ENCODE measurements at regions of chr22 and their contacts with region 1.

Region 1: GRCh38 chr22:46006379-46007002 is 29.5 kb upstream of the WNT7B start:
- DNase-seq: peak; percentile 72 to 90 (median 85)
- H3K4me3 ChIP-seq: no peak overlapping the region
- H3K4me3 Mint-ChIP-seq: peak overlapping the region in 4 of 7 donors; percentile 10 to 53 (median 26)
- H3K27ac ChIP-seq: no peak overlapping the region
- H3K27ac Mint-ChIP-seq: peak overlapping the region in 3 of 8 donors; percentile 19 to 79 (median 58)
- H3K4me1 ChIP-seq: peaks cover 8% of the 10 kb centered on the region
- H3K4me1 Mint-ChIP-seq: peaks cover 10 to 13% (median 12%) of the 10 kb centered on the region in 3 donors
- H3K27me3 ChIP-seq: no peaks in the 10 kb centered on the region
- H3K27me3 Mint-ChIP-seq: peaks cover 6% of the 10 kb centered on the region in 2 donors

Region 2: GRCh38 chr22:45775569-45776312 is 230.8 kb before region 1 on chr22:
- CTCF ChIA-PET with region 1: no interaction called
- POLR2A ChIA-PET with region 1: no interaction called
- DNase-seq: no peak
- H3K4me3 ChIP-seq: no peak overlapping the region
- H3K4me3 Mint-ChIP-seq: no peak overlapping the region
- H3K27ac ChIP-seq: no peak overlapping the region
- H3K27ac Mint-ChIP-seq: no peak overlapping the region
- H3K4me1 ChIP-seq: no peaks in the 10 kb centered on the region
- H3K4me1 Mint-ChIP-seq: peaks cover 2 to 31% (median 12%) of the 10 kb centered on the region in 3 donors
- H3K27me3 ChIP-seq: no peaks in the 10 kb centered on the region
- H3K27me3 Mint-ChIP-seq: no peaks in the 10 kb centered on the region

Region 3: DNA sequence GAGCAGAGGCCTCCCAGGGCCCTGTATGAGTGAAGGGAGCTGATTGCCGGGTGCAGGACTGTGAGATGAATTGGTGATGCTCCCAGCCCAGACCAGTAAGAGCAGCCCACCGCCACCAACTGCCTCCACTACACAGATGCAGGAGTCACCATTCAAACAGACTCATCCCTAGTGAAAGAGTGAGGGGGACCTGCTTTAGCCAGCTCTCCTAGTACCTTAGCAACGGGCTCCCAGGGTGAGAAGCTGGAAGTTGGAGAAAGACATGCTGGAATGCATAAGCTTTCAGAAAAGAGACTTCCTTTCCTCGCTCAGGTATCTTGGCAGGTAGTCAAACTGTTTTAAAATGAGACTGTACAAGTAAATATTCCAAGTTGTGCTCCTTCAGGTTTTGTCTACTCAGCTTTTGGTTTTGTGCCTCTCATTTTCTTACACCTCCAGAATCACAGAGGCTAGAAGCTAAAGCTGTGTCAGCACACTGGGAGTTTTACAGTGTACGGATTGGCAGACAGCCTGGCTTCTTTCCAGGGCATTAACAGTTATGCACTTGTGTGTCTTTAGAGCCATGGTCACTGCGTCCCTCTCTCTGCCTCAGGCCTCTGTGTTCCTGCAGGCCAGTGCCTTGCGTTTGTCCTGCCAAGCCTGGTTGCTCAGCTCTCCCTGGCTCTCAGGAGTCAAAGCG is 188.6 kb before region 1 on chr22:
- CTCF ChIA-PET with region 1: no interaction called
- POLR2A ChIA-PET with region 1: no interaction called
- DNase-seq: no peak
- H3K4me3 ChIP-seq: no peak overlapping the region
- H3K4me3 Mint-ChIP-seq: no peak overlapping the region
- H3K27ac ChIP-seq: no peak overlapping the region
- H3K27ac Mint-ChIP-seq: no peak overlapping the region
- H3K4me1 ChIP-seq: no peaks in the 10 kb centered on the region
- H3K4me1 Mint-ChIP-seq: peaks cover 0 to 6% (median 0%) of the 10 kb centered on the region in 3 donors
- H3K27me3 ChIP-seq: no peaks in the 10 kb centered on the region
- H3K27me3 Mint-ChIP-seq: peaks cover 0 to 1% of the 10 kb centered on the region in 2 donors

Region 4: GRCh38 chr22:45867118-45867905 is 139.2 kb before region 1 on chr22:
- CTCF ChIA-PET with region 1: no interaction called
- POLR2A ChIA-PET with region 1: no interaction called
- DNase-seq: no peak
- H3K4me3 ChIP-seq: no peak overlapping the region
- H3K4me3 Mint-ChIP-seq: no peak overlapping the region
- H3K27ac ChIP-seq: no peak overlapping the region
- H3K27ac Mint-ChIP-seq: no peak overlapping the region
- H3K4me1 ChIP-seq: no peaks in the 10 kb centered on the region
- H3K4me1 Mint-ChIP-seq: peaks cover 5 to 11% (median 5%) of the 10 kb centered on the region in 3 donors
- H3K27me3 ChIP-seq: peaks cover 13% of the 10 kb centered on the region
- H3K27me3 Mint-ChIP-seq: peaks cover 22 to 37% of the 10 kb centered on the region in 2 donors

Region 5: GRCh38 chr22:45994491-45995404 is 11.7 kb before region 1 on chr22:
- CTCF ChIA-PET with region 1: interaction called, 68 read pairs
- POLR2A ChIA-PET with region 1: no interaction called
- DNase-seq: peak; percentile 52 to 80 (median 71)
- H3K4me3 ChIP-seq: no peak overlapping the region
- H3K4me3 Mint-ChIP-seq: peak overlapping the region in 1 of 7 donors; percentile 51
- H3K27ac ChIP-seq: no peak overlapping the region
- H3K27ac Mint-ChIP-seq: peak overlapping the region in 6 of 8 donors; percentile 24 to 81 (median 69)
- H3K4me1 ChIP-seq: no peaks in the 10 kb centered on the region
- H3K4me1 Mint-ChIP-seq: peaks cover 6 to 11% (median 9%) of the 10 kb centered on the region in 3 donors
- H3K27me3 ChIP-seq: no peaks in the 10 kb centered on the region
- H3K27me3 Mint-ChIP-seq: peaks cover 5 to 6% of the 10 kb centered on the region in 2 donors

Region 6: DNA sequence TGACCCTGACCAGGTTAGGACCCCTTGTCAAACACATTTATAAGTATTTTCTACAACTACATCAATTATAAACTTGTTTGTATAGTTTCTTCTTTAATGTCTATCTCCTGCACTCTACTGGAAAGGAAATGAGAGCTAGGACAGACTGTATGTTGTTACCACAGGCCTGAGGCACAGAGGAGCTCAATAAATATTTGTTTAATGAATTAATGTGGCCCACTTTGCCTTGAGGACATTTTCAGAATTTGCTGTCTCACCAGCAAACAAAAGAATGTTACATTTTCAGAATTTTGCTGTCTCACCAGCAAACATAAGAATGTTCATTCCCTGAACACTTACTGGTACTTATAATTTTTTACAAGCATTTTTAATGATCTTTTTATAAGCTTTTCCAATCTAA is 12.3 kb after region 1 on chr22:
- CTCF ChIA-PET with region 1: interaction called, 17 read pairs
- POLR2A ChIA-PET with region 1: no interaction called
- DNase-seq: no peak
- H3K4me3 ChIP-seq: no peak overlapping the region
- H3K4me3 Mint-ChIP-seq: no peak overlapping the region
- H3K27ac ChIP-seq: no peak overlapping the region
- H3K27ac Mint-ChIP-seq: no peak overlapping the region
- H3K4me1 ChIP-seq: no peaks in the 10 kb centered on the region
- H3K4me1 Mint-ChIP-seq: peaks cover 0 to 4% (median 0%) of the 10 kb centered on the region in 3 donors
- H3K27me3 ChIP-seq: peaks cover under 1% of the 10 kb centered on the region
- H3K27me3 Mint-ChIP-seq: peaks cover 2 to 5% of the 10 kb centered on the region in 2 donors

Region 7: DNA sequence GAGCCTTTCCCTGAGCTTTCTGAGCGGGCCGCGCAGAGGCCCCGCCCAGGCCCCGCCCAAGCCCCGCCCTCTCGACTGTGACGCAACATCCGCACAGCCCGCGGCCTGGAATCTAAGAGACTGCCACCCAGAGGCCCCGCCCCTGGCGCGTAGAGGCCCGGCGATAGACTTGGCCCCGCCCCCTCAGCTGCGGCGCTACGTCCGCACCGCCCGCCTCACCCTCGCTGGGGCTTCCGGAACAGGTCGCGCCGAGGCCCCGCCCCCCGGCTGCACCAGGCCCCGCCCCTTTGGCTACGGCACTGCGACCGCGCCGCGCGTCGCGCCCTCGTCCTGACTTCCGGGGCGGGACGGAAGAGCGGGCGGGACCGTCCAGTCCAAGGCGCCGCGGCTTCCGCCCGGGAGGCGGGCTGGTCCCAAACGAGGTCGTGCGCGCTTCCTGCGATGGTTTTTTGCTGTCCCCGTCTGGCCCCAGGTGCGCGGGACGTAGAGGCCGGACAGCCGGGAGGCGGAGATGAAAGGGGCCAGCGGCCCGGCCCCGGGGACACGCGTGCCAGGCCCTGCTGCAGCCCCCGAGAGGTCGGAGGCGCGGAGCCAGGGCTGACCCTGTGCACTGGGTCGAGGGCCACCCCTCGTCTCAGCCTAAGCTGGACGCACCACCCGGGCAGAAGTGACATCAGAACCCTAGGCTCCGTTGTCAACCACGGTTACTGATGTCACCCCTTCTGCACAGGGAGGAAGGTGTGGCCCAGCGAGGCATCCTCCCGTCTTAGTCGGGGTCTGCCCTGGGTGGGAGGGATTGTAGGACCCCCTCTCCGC is 29.5 kb after region 1 on chr22:
- CTCF ChIA-PET with region 1: interaction called, 41 read pairs
- POLR2A ChIA-PET with region 1: interaction called, 39 read pairs
- DNase-seq: peak; percentile 99 to 100 (median 100)
- H3K4me3 ChIP-seq: peak overlapping the region; percentile 76
- H3K4me3 Mint-ChIP-seq: peak overlapping the region; percentile 81 to 91 (median 85)
- H3K27ac ChIP-seq: peak overlapping the region; percentile 89
- H3K27ac Mint-ChIP-seq: peak overlapping the region; percentile 94 to 98 (median 97)
- H3K4me1 ChIP-seq: peaks cover 20% of the 10 kb centered on the region
- H3K4me1 Mint-ChIP-seq: peaks cover 19 to 21% (median 19%) of the 10 kb centered on the region in 3 donors
- H3K27me3 ChIP-seq: no peaks in the 10 kb centered on the region
- H3K27me3 Mint-ChIP-seq: no peaks in the 10 kb centered on the region

Region 8: GRCh38 chr22:46044621-46045438 is 38.3 kb after region 1 on chr22:
- CTCF ChIA-PET with region 1: interaction called, 10 read pairs
- POLR2A ChIA-PET with region 1: no interaction called
- DNase-seq: peak in 4 of 5 donors; percentile 17 to 54 (median 36)
- H3K4me3 ChIP-seq: peak overlapping the region; percentile 69
- H3K4me3 Mint-ChIP-seq: peak overlapping the region; percentile 78 to 86 (median 82)
- H3K27ac ChIP-seq: no peak overlapping the region
- H3K27ac Mint-ChIP-seq: peak overlapping the region; percentile 29 to 93 (median 75)
- H3K4me1 ChIP-seq: peaks cover 18% of the 10 kb centered on the region
- H3K4me1 Mint-ChIP-seq: peaks cover 3 to 31% (median 8%) of the 10 kb centered on the region in 3 donors
- H3K27me3 ChIP-seq: no peaks in the 10 kb centered on the region
- H3K27me3 Mint-ChIP-seq: no peaks in the 10 kb centered on the region

Region 9: DNA sequence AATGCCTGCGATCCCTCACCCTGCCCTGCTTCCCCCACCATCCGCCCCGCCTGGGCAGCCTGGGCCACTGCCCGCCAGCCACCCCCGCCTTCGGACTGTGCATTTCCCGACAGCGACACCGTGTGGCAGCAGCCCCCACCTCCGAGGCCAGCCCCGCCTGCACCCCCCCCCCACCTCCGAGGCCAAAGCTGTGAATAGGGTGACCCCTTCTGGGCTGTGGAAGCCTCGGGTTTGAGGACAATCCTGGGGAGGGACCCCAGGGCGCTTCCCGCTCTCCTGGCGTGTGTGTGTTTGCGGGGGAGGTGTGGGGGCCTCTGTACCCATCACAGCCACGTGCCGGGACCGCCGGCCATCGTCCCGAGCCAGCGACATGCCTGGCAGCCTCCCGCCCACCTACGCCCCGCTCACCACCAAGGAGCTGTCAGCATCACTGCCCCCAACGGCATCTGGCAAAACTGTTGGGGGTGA is 110.0 kb after region 1 on chr22:
- CTCF ChIA-PET with region 1: interaction called, 134 read pairs
- POLR2A ChIA-PET with region 1: no interaction called
- DNase-seq: peak; percentile 68 to 90 (median 79)
- H3K4me3 ChIP-seq: no peak overlapping the region
- H3K4me3 Mint-ChIP-seq: no peak overlapping the region
- H3K27ac ChIP-seq: no peak overlapping the region
- H3K27ac Mint-ChIP-seq: peak overlapping the region in 1 of 8 donors; percentile 14
- H3K4me1 ChIP-seq: no peaks in the 10 kb centered on the region
- H3K4me1 Mint-ChIP-seq: peaks cover 0 to 5% (median 3%) of the 10 kb centered on the region in 3 donors
- H3K27me3 ChIP-seq: no peaks in the 10 kb centered on the region
- H3K27me3 Mint-ChIP-seq: no peaks in the 10 kb centered on the region

Region 10: GRCh38 chr22:46122511-46122971 is 116.0 kb after region 1 on chr22:
- CTCF ChIA-PET with region 1: interaction called, 134 read pairs
- POLR2A ChIA-PET with region 1: no interaction called
- DNase-seq: peak; percentile 49 to 78 (median 61)
- H3K4me3 ChIP-seq: no peak overlapping the region
- H3K4me3 Mint-ChIP-seq: no peak overlapping the region
- H3K27ac ChIP-seq: no peak overlapping the region
- H3K27ac Mint-ChIP-seq: peak overlapping the region in 1 of 8 donors; percentile 65
- H3K4me1 ChIP-seq: no peaks in the 10 kb centered on the region
- H3K4me1 Mint-ChIP-seq: no peaks in the 10 kb centered on the region
- H3K27me3 ChIP-seq: no peaks in the 10 kb centered on the region
- H3K27me3 Mint-ChIP-seq: no peaks in the 10 kb centered on the region

Measured in CD8-positive, alpha-beta memory T cell (primary cell).